CD4-positive, alpha-beta T cell (primary cell): ENCODE measurements at regions of chr6 and their contacts with region 1.

Region 1: DNA sequence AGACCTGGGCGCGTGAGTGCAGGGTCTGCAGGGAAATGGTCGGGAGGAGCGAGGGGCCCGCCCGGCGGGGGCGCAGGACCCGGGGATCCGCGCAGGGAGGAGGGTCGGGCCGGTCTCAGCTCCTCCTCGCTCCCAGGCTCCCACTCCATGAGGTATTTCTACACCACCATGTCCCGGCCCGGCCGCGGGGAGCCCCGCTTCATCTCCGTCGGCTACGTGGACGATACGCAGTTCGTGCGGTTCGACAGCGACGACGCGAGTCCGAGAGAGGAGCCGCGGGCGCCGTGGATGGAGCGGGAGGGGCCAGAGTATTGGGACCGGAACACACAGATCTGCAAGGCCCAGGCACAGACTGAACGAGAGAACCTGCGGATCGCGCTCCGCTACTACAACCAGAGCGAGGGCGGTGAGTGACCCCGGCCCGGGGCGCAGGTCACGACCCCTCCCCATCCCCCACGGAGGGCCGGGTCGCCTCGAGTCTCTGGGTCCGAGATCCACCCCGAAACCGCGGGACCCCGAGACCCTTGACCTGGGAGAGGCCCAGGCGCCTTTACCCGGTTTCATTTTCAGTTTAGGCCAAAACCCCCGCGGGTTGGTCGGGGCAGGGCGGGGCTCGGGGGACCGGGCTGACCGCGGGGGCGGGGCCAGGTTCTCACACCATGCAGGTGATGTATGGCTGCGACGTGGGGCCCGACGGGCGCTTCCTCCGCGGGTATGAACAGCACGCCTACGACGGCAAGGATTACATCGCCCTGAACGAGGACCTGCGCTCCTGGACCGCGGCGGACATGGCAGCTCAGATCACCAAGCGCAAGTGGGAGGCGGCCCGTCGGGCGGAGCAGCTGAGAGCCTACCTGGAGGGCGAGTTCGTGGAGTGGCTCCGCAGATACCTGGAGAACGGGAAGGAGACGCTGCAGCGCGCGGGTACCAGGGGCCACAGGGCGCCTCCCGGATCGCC is 54.2 kb upstream of the HLA-A start:
- DNase-seq: peak; percentile 66 to 95 (median 84)
- ATAC-seq: peak; percentile 80
- H3K4me3 ChIP-seq: peak overlapping the region; percentile 86
- H3K4me3 Mint-ChIP-seq: peak overlapping the region; percentile 93
- H3K27ac ChIP-seq: peak overlapping the region; percentile 73 to 89
- H3K27ac Mint-ChIP-seq: peak overlapping the region; percentile 97
- H3K4me1 ChIP-seq: peaks cover 22% of the 10 kb centered on the region
- H3K4me1 Mint-ChIP-seq: peaks cover 43% of the 10 kb centered on the region
- H3K27me3 ChIP-seq: no peaks in the 10 kb centered on the region
- H3K27me3 Mint-ChIP-seq: no peaks in the 10 kb centered on the region
- CTCF ChIP-seq: no peak

Region 2: DNA sequence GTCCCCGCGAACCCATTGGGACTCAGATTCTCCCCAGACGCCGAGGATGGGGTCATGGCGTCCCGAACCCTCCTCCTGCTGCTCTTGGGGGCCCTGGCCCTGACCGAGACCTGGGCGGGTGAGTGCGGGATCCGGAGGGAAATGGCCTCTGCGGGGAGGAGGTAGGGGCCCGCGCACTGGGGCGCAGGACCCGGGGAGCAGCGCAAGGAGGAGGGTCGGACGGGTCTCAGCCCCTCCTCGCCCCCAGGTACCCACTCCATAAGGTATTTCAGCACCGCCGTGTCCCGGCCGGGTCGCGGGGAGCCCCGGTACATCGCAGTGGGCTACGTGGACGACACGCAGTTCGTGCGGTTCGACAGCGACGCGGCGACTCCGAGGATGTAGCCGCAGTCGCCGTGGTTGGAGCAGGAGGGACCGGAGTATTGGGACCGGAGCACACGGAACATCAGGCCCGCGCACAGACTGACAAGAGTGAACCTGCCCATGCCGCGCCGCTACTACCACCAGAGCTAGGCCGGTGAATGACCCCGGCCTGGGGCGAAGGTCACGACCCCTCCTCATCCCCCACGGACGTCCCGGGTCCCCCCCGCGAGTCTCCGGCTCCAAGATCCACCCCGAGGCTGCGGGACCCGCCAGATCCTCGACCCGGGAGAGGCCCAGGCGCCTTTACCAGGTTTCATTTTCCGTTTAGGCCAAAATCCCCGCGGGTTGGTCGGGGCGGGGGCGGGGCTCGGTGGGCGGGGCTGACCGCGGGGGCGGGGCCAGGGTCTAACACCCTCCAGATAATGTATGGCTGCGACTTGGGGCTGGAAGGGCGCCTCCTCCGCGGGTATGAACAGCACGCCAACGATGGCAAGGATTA is 38.5 kb after region 1 on chr6:
- CTCF ChIA-PET with region 1: no interaction called
- POLR2A ChIA-PET with region 1: interaction called, 5 read pairs
- intact Hi-C with region 1: loop called (anchors 5 kb)
- DNase-seq: peak; percentile 59 to 96 (median 85)
- ATAC-seq: peak; percentile 93
- H3K4me3 ChIP-seq: peak overlapping the region; percentile 97
- H3K4me3 Mint-ChIP-seq: peak overlapping the region; percentile 98
- H3K27ac ChIP-seq: peak overlapping the region; percentile 93 to 99
- H3K27ac Mint-ChIP-seq: peak overlapping the region; percentile 92
- H3K4me1 ChIP-seq: peaks cover 24% of the 10 kb centered on the region
- H3K4me1 Mint-ChIP-seq: peaks cover 26% of the 10 kb centered on the region
- H3K27me3 ChIP-seq: no peaks in the 10 kb centered on the region
- H3K27me3 Mint-ChIP-seq: no peaks in the 10 kb centered on the region
- CTCF ChIP-seq: no peak

Region 3: DNA sequence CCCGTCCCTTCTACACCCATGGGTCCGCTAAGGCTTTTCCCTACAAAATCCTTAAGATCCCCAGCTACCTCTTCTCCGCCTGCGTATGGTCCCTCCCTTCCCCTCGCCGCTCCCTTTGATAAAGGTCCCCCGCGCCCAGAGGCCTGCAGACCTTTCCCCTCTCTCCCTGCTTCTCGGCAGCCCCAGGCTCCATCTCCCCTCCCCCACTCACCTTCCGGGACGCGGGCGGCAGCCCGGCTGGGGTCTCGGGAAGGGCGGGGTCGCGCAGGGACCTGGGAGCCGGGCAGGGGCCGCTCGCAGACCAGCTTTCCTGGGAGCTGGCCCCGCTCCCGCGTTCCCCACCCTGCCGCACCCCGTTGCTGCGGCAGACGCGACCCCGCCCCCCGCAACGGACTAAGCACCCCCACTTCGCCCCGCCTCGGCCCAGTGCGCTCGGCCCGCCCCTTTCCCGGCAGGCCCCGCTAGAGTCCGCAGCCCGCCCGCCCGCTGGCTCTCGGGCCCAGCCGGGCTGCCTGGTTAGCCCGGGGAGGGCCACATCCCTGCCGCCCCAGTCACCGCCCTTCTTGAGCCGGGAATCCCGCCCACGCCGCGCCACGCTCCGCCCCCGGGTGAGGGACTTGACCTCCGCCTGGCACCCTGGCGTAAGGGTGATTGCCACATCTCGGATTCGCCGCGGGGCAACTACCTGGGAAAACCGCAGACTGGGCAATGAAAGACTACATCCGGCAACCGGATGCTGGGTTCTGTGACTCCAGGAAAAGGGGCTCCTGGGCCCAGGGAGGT is 854.4 kb after region 1 on chr6 and contains the start of gene FLOT1:
- CTCF ChIA-PET with region 1: no interaction called
- POLR2A ChIA-PET with region 1: no interaction called
- intact Hi-C with region 1: no loop called
- DNase-seq: peak; percentile 52 to 93 (median 76)
- ATAC-seq: peak; percentile 53
- H3K4me3 ChIP-seq: peak within 1 kb of the TSS; percentile 85
- H3K4me3 Mint-ChIP-seq: peak within 1 kb of the TSS; percentile 97
- H3K27ac ChIP-seq: peak within 1 kb of the TSS; percentile 31 to 76
- H3K27ac Mint-ChIP-seq: peak within 1 kb of the TSS; percentile 91
- H3K4me1 ChIP-seq: peaks cover 66% of the 10 kb centered on the region
- H3K4me1 Mint-ChIP-seq: peaks cover 61% of the 10 kb centered on the region
- H3K27me3 ChIP-seq: no peaks in the 10 kb centered on the region
- H3K27me3 Mint-ChIP-seq: no peaks in the 10 kb centered on the region
- CTCF ChIP-seq: no peak
- total RNA-seq, gene FLOT1: 31.6 TPM